Activated CD4-positive, alpha-beta T cell treated with anti-CD3 and anti-CD28 coated beads, Interleukin-2, amount 10 ng/mL, durations not matched to agents 24 days and 14 days (primary cell): ENCODE measurements at regions of chr15 and their contacts with region 1.

Region 1: GRCh38 chr15:41230650-41231533 is at the starts of genes CHP1 and EXD1:
- DNase-seq: peak; percentile 99
- H3K4me3 Mint-ChIP-seq: peak within 1 kb of the TSS; percentile 94
- H3K27ac Mint-ChIP-seq: peak within 1 kb of the TSS; percentile 93
- H3K4me1 Mint-ChIP-seq: peaks cover 19% of the 10 kb centered on the region
- H3K27me3 Mint-ChIP-seq: peaks cover 2% of the 10 kb centered on the region
- total RNA-seq, gene CHP1: 47.4 and 47.8 TPM in 2 replicates
- total RNA-seq, gene EXD1: not detected in 2 replicates

Region 2: GRCh38 chr15:40952901-40953712 is 277.8 kb before region 1 on chr15 and contains the start of gene CHAC1:
- intact Hi-C with region 1: loop called (anchors 2 kb)
- DNase-seq: peak; percentile 99
- H3K4me3 Mint-ChIP-seq: peak within 1 kb of the TSS; percentile 92
- H3K27ac Mint-ChIP-seq: peak within 1 kb of the TSS; percentile 91
- H3K4me1 Mint-ChIP-seq: peaks cover 32% of the 10 kb centered on the region
- H3K27me3 Mint-ChIP-seq: no peaks in the 10 kb centered on the region
- total RNA-seq, gene CHAC1: 8.4 and 9.8 TPM in 2 replicates

Region 3: DNA sequence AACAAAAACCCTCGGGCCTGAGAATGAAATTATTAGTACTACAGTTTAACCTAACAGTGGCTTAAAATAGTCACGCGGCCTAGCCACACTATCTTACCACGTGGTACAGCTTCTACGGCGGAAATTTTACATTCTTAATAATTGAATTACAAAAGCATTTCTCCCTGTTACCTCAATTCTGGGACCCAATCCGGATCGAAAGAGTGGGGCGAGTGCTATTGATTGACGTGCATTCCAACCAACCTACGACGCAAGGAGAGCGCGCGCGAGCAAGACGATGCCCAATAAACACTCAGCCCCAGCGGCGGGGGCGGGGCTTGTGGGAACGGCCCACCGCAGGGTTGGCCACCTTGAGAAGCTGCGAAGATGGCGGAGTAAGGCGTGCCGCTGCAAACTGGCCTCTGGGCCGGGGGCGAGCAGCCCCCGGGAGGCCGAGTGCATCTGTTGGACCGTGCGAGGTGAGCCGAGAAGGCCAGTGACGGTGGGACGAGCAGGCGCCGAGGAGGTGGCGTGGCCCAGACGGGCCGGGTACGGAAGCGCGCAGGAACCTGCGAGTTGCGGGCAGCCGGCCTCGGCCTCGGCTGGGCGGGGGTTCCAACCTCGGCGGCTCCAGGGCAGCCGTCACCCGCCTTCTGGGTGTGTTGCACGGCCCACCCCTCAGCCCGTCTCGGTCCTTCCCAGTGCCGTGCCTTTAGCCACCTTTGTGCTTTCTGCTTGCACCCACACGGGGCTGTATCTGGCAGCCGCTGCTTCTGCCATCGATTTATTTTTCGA is 52.9 kb after region 1 on chr15:
- intact Hi-C with region 1: loop called (anchors 1 kb)
- DNase-seq: peak; percentile 99
- H3K4me3 Mint-ChIP-seq: peak overlapping the region; percentile 99
- H3K27ac Mint-ChIP-seq: peak overlapping the region; percentile 98
- H3K4me1 Mint-ChIP-seq: peaks cover 45% of the 10 kb centered on the region
- H3K27me3 Mint-ChIP-seq: no peaks in the 10 kb centered on the region

Region 4: DNA sequence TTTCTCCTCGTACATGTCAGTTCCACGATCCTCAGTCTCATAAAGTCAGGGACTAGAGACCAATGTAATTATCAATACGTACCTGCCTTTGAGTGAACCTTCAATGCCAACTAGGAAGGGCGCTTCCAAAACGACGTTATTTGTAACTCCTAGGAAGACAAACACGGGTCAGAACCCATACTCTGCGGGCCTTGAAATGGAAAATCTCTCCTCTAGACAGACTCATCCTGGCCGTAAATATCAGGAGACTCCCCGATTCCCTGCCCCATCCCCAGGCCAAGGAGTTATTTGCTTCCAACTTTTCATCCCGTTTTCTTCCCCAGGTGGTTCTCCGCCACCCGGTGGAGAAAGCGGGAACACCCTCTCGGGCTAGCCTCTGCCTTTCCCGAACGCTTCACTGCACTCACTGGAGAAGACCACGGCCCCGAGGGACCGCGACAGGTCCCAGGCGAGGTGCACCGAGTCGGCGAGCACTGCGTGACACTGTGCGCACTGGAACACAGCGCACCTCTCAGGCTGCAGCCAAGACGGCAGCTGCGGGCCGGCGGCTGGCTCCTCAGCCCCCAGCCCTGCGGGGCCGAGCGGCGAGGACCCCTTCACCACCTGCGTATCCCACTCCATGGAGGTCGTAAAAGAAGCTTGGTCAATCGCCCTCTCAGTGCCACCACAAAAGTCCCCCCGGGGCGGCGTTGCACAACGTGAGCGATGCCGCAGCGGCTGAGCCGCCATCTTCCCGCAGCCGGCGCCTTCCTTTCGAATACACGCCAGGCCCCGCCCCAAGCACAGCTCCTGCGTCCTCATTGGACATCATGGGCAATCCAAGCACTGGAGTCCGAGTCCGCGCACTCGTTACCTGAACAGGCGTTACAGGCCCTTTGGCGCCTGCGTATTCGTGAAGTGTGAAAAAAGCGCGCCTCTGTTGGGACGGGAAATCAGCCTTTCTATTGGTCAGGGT is 101.2 kb after region 1 on chr15 and contains the start of gene OIP5:
- intact Hi-C with region 1: loop called (anchors 1 kb)
- DNase-seq: peak; percentile 100
- H3K4me3 Mint-ChIP-seq: peak within 1 kb of the TSS; percentile 95
- H3K27ac Mint-ChIP-seq: peak within 1 kb of the TSS; percentile 98
- H3K4me1 Mint-ChIP-seq: peaks cover 29% of the 10 kb centered on the region
- H3K27me3 Mint-ChIP-seq: no peaks in the 10 kb centered on the region
- total RNA-seq, gene OIP5: 15.8 and 21.0 TPM in 2 replicates